SK-N-SH (cell line): ENCODE measurements at regions of chr5 and their contacts with region 1.

Region 1: DNA sequence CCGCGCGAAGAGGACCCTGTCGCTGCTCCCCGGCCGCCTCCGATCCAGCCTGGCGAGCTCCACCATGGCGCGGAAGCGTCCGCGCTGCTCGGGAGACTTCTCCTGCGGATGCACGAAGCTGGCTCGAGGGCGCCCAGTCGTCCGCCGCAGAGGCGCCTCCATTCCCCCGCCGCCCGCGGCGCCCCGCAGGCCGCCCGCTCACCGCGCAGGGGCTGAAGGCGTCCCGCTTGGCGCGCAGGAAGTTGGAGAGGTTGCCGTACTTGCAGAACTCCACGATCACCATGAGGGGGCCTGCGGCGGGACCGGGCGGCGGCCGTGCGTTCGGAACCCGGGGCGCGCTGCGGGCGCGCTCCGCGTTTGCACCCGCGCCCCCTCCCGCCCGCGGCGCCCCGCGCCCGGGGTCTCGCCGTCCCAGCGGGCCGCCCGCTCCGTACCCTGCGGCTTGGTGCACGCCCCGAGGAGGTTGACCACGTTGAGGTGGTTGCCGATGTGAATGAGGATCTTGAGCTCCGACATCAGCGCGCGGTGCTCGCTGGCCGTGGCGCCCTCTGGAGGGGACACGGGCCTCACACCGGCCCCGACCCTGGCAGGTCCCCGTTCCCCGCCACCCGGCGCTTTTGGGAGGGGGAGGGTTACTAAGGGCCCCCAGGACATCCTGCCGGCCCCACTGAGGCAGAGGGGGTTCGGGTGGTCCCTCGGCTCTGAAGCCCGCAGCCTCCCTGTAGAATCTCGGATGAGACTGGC is 27.7 kb upstream of the SCGB3A1 start:
- DNase-seq: peak; percentile 91
- H3K4me3 ChIP-seq: peak overlapping the region; percentile 35 to 46; a peak in 3 of 4 replicates
- H3K27ac ChIP-seq: no peak overlapping the region
- H3K4me1 ChIP-seq: no peaks in the 10 kb centered on the region
- H3K27me3 ChIP-seq: peaks cover 18% of the 10 kb centered on the region
- CTCF ChIP-seq: peak; percentile 53
- EP300 ChIP-seq: no peak
- RAD21 ChIP-seq: 0 out of 2 replicates have a peak, but pooled peaks have one; percentile 9

Region 2: DNA sequence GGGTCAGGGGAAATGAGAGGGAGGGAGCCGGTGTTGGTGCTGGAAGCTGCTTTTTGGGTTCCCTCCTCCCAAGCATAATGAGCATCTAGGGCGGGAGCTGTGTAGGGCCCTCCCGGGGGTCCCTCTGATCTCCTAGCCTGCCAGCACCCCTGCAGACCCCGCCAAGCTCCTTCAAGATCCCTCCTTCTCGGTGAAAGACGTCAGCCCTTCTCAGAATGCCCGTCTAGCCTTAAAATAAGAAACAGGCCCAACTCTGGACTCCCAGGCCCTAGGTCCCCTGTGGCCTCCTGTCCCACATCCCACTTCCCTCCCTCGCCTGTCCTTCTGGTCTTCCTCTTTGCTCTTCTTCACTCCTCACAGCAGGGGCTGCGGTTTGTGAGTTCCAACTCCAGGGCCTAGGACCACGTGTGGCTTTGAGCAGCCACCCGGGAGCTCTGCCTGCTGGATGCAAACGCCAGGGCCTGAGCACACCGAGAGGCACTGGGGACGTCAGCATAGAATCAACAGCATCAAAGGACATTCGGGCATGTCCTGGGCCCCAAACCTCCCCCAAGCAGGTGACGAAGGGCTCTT is 18.9 kb before region 1 on chr5:
- CTCF ChIA-PET with region 1: interaction called, 43 read pairs
- POLR2A ChIA-PET with region 1: no interaction called
- DNase-seq: peak; percentile 27
- H3K4me3 ChIP-seq: no peak overlapping the region
- H3K27ac ChIP-seq: no peak overlapping the region
- H3K4me1 ChIP-seq: no peaks in the 10 kb centered on the region
- H3K27me3 ChIP-seq: no peaks in the 10 kb centered on the region; the same call in 1 of the 2 replicates
- CTCF ChIP-seq: no peak
- EP300 ChIP-seq: no peak
- RAD21 ChIP-seq: no peak

Region 3: DNA sequence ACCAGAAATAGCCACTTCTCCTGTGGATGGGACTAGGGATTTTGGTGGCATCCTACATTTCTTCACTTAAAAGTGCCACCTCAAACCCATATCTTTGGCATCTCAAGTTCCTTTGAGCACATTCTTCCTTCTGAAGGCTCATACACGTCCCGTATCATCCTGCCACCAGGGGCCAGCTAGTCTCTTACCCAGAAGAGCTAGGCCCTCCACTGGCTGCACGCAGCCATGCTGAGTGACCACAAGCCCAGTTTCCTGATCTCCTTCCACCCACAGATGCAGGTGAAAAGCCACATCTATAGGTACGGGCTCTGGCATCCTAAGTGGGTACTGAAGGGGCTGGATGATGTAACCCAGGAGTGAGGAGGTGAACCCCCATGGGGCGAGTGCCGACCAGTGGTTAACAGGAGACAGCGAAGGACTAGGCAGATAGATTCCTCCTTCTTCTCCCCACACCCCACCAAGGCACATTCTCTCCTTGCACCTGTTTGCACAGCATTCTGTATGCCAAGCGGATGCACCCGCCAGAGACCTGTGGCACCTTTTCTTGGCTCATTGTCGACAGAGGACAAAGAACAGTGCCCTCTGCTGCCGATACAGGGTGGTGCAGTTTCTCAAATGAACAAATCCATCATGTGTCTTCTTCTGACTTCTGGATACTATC is 13.3 kb before region 1 on chr5:
- CTCF ChIA-PET with region 1: interaction called, 43 read pairs
- POLR2A ChIA-PET with region 1: no interaction called
- DNase-seq: peak; percentile 74
- H3K4me3 ChIP-seq: peak overlapping the region in 1 of 2 experiments; percentile 48; a peak in 1 of 4 replicates
- H3K27ac ChIP-seq: no peak overlapping the region
- H3K4me1 ChIP-seq: no peaks in the 10 kb centered on the region
- H3K27me3 ChIP-seq: no peaks in the 10 kb centered on the region; the same call in 1 of the 2 replicates
- CTCF ChIP-seq: peak; percentile 76
- EP300 ChIP-seq: no peak
- RAD21 ChIP-seq: peak; percentile 59

Region 4: GRCh38 chr5:180860887-180861822 is 242.2 kb after region 1 on chr5 and contains the start of gene ZFP62:
- CTCF ChIA-PET with region 1: no interaction called
- POLR2A ChIA-PET with region 1: no interaction called
- DNase-seq: peak; percentile 94
- H3K4me3 ChIP-seq: peak within 1 kb of the TSS; percentile 87 to 99
- H3K27ac ChIP-seq: peak within 1 kb of the TSS; percentile 77 to 90
- H3K4me1 ChIP-seq: no peaks in the 10 kb centered on the region; a peak in 2 of 4 replicates
- H3K27me3 ChIP-seq: 0 out of 2 replicates have a peak, but pooled peaks cover 1% of the 10 kb centered on the region
- CTCF ChIP-seq: no peak; the same call in 1 of the 2 replicates
- EP300 ChIP-seq: peak in 1 of 2 experiments; percentile 31; a peak in 1 of 4 replicates
- RAD21 ChIP-seq: no peak
- polyA plus RNA-seq, gene ZFP62: 6.0 and 9.0 TPM in 2 replicates